IMR-90 (cell line): ENCODE measurements at regions of chr7 and their contacts with region 1.

Region 1: GRCh38 chr7:27196287-27196767 is 3.6 kb downstream of the HOXA13 start:
- DNase-seq: peak; percentile 71
- ATAC-seq: peak; percentile 41; the same call in 1 of the 2 replicates
- H3K4me3 ChIP-seq: no peak overlapping the region
- H3K27ac ChIP-seq: no peak overlapping the region
- H3K4me1 ChIP-seq: no peaks in the 10 kb centered on the region
- H3K27me3 ChIP-seq: peaks cover 86% of the 10 kb centered on the region
- CTCF ChIP-seq: peak; percentile 84
- POLR2A ChIP-seq: 0 out of 2 replicates have a peak, but pooled peaks have one; percentile 37
- RAD21 ChIP-seq: peak; percentile 94

Region 2: DNA sequence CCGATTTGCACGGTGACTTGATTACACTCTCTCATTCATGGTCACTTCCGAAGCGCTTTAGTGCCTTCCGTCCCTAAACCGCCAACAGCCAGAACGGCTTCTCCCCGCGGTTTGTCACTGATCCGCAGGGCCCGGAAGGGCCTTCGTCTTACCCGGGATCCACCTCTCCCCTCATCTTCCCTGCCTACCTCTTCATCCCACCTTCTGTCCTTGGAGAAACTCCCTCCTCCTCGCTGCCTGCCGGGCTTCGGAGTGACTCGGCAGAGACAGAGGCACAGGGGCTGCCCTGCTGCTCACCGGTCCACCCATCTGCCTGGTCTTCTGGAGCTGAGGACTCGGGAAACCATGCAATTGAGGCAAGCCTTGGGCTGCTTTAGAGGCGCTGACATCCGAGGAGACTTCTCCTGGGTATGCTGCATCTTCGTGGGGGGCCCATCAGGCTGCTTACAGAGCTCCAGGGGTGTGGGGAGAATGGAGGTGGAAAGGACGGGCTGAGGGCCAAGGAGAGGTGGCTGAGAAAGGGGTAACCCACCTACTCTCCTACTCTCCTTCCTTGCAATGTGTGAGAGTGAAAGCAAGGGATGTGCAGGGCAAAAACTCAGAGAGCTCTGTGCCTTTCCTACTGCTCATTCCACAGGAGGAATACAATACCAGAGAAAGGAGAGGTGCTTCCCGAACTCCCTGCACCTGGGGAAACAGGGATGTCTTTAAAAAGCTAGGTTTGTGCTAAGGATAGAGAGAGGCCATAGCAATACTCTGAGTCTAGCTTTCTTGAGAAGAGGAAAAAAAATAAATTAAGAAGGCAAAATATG is 10.3 kb before region 1 on chr7:
- CTCF ChIA-PET with region 1: interaction called, 10 read pairs
- POLR2A ChIA-PET with region 1: no interaction called
- dilution Hi-C with region 1: no loop called
- in situ Hi-C with region 1: no loop called
- intact Hi-C with region 1: no loop called
- DNase-seq: no peak
- ATAC-seq: no peak
- H3K4me3 ChIP-seq: no peak overlapping the region
- H3K27ac ChIP-seq: no peak overlapping the region
- H3K4me1 ChIP-seq: peaks cover 3% of the 10 kb centered on the region; the same call in 1 of the 2 replicates
- H3K27me3 ChIP-seq: peaks cover 93% of the 10 kb centered on the region
- CTCF ChIP-seq: no peak
- POLR2A ChIP-seq: no peak
- RAD21 ChIP-seq: no peak

Region 3: GRCh38 chr7:27254625-27255024 is 58.3 kb after region 1 on chr7:
- CTCF ChIA-PET with region 1: no interaction called
- POLR2A ChIA-PET with region 1: no interaction called
- dilution Hi-C with region 1: no loop called
- in situ Hi-C with region 1: no loop called
- intact Hi-C with region 1: no loop called
- DNase-seq: no peak
- ATAC-seq: no peak
- H3K4me3 ChIP-seq: no peak overlapping the region
- H3K27ac ChIP-seq: no peak overlapping the region
- H3K4me1 ChIP-seq: no peaks in the 10 kb centered on the region
- H3K27me3 ChIP-seq: peaks cover 59% of the 10 kb centered on the region
- CTCF ChIP-seq: no peak
- POLR2A ChIP-seq: no peak
- RAD21 ChIP-seq: no peak

Region 4: DNA sequence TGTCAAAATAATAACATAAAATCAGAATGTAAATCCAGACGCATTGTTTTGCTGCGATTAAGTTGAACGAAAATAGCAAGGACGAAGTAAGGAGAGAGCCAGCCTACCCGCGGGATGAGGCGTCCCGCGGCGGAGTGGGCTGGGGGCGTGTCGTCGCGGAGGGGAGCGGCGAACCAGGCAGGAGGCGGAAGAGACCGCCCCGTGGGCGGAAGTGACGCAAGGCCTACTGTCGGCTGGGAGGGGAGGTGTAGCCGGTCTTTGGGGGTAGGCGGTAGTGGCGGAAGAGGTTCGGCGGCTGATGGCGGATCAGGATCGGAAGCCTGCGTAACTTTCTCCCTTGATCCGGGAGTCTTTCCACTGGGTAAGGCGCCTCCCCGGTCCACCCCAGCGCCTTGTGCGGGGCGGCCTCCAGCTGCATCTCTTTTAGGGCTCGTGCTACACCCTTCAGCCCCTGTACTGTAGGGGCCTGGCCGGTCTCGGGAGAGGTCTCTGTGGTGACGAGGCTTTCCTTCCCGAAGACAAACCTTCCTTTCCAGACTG is 543.7 kb after region 1 on chr7 and contains the start of gene TAX1BP1:
- CTCF ChIA-PET with region 1: no interaction called
- POLR2A ChIA-PET with region 1: no interaction called
- dilution Hi-C with region 1: no loop called
- in situ Hi-C with region 1: no loop called
- intact Hi-C with region 1: loop called (anchors 10 kb)
- DNase-seq: peak; percentile 94
- ATAC-seq: peak; percentile 95
- H3K4me3 ChIP-seq: peak within 1 kb of the TSS; percentile 86
- H3K27ac ChIP-seq: peak within 1 kb of the TSS; percentile 90
- H3K4me1 ChIP-seq: peaks cover 3% of the 10 kb centered on the region; the same call in 1 of the 2 replicates
- H3K27me3 ChIP-seq: no peaks in the 10 kb centered on the region
- CTCF ChIP-seq: no peak
- POLR2A ChIP-seq: peak; percentile 93
- RAD21 ChIP-seq: no peak
- total RNA-seq, gene TAX1BP1: 52.7 and 68.9 TPM in 2 replicates

Region 5: GRCh38 chr7:28020302-28020940 is 824.1 kb after region 1 on chr7:
- CTCF ChIA-PET with region 1: no interaction called
- POLR2A ChIA-PET with region 1: no interaction called
- dilution Hi-C with region 1: no loop called
- in situ Hi-C with region 1: no loop called
- intact Hi-C with region 1: loop called (anchors 1 kb)
- DNase-seq: peak; percentile 77
- ATAC-seq: peak; percentile 93
- H3K4me3 ChIP-seq: no peak overlapping the region
- H3K27ac ChIP-seq: no peak overlapping the region
- H3K4me1 ChIP-seq: peaks cover 12% of the 10 kb centered on the region
- H3K27me3 ChIP-seq: no peaks in the 10 kb centered on the region
- CTCF ChIP-seq: peak; percentile 87
- POLR2A ChIP-seq: no peak
- RAD21 ChIP-seq: peak; percentile 96

Region 6: DNA sequence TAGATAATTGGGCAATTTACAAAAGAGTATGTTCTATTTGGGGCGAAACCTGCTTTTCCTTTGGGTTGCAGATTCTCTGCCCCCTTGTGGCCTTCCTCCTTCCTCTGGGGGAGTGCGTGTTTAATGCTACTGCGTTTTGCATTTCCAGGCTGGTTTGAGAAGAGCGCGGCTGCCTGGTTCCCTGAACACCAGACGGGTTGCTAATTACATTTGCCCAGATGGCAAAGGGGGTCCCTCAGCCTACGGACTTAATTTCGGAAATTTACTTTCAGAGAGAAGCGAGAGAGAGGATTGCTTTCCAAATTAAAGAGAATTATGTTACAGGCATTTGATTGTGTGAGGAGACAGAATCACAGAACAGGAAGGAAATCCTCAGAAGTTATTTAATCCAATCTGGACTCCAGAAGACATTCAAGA is 1076.1 kb after region 1 on chr7:
- CTCF ChIA-PET with region 1: no interaction called
- POLR2A ChIA-PET with region 1: no interaction called
- dilution Hi-C with region 1: no loop called
- in situ Hi-C with region 1: no loop called
- intact Hi-C with region 1: loop called (anchors 5 kb)
- DNase-seq: peak; percentile 68
- ATAC-seq: peak; percentile 96
- H3K4me3 ChIP-seq: no peak overlapping the region; the same call in 1 of the 2 replicates
- H3K27ac ChIP-seq: no peak overlapping the region
- H3K4me1 ChIP-seq: no peaks in the 10 kb centered on the region
- H3K27me3 ChIP-seq: no peaks in the 10 kb centered on the region; the same call in 1 of the 2 replicates
- CTCF ChIP-seq: peak; percentile 65
- POLR2A ChIP-seq: no peak
- RAD21 ChIP-seq: peak; percentile 63

Region 7: DNA sequence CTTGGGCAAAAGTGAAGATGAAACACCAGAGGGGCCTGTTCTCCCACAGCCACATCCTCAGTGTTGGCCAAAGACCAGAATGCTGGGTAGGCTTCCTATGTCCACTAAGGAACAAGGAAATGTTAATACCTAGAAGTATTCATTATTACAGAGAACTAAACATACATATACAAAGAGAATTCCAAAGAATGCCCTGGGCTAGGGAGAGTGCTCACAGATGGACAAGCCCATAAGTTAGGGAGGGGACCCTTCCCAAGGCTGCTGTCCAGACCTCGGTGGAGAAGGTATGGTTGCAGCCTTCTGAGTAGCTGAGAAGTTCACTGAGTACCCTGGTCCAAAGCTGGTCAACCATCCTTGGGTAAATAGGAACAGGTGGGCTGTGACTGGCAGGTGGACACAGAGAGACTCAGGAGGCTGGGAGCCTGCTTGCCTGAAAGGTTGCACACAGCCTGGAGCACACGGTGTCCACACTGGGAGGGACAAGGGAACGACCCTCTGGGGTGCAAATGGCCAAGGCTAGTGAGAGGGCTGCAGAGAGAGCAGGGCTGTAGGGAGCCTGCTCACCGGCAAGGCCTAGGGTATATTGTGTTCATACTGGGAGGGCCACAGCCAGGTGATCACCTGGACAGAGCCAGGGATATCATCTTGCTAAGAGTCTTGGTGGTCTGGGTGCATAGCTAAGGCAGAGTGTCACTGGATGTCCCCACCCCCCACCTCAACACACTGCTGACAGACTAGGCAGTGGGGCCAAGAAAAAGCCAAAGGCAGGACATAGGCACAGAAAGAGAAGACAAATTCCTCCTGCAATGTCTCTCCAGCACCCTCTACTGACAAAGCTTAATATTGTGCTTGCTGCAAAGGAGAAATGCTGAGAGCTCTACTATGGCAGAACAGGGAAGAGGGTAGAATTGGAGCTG is 1909.7 kb after region 1 on chr7:
- CTCF ChIA-PET with region 1: no interaction called
- POLR2A ChIA-PET with region 1: no interaction called
- dilution Hi-C with region 1: no loop called
- in situ Hi-C with region 1: no loop called
- intact Hi-C with region 1: loop called (anchors 10 kb)
- DNase-seq: peak; percentile 60
- ATAC-seq: peak; percentile 97
- H3K4me3 ChIP-seq: no peak overlapping the region
- H3K27ac ChIP-seq: no peak overlapping the region
- H3K4me1 ChIP-seq: no peaks in the 10 kb centered on the region
- H3K27me3 ChIP-seq: peaks cover 7% of the 10 kb centered on the region
- CTCF ChIP-seq: peak; percentile 87
- POLR2A ChIP-seq: no peak
- RAD21 ChIP-seq: peak; percentile 79